Spleen (tissue), 13 donors: ENCODE measurements at regions of chr13 and their contacts with region 1.

Region 1: DNA sequence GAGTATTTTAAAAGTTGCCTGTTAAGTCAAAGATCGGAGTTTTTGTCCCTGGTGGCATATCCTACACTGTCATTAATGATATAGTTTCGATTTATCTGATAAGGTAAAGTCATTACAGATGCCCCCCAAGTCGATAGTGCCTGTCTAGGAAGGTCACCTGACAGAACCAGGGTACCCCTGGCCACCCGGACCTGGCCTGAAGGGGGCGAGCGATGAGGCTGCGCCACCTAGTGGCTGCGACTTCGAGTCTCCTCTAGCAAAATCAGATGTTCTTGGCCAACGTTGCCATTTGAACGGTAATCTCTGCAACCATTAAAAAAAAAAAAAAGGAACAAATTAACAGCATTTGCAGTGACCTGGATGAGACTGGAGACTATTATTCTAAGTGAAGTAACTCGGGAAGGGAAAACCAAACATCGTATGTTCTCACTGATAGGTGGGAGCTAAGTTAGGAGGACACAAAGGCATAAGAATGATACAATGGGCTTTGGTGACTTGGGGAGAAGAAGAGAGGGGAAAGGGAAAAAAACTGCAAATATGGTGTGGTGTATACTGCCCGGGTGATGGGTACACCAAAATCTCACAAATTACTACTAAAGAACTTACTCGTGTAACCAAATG is 565.1 kb downstream of the LIG4 start:
- DNase-seq: peak; percentile 68
- H3K4me3 ChIP-seq: no peak overlapping the region
- H3K27ac ChIP-seq: no peak overlapping the region
- H3K4me1 ChIP-seq: no peaks in the 10 kb centered on the region
- H3K27me3 ChIP-seq: no peaks in the 10 kb centered on the region
- CTCF ChIP-seq: peak in 10 of 11 experiments; percentile 12 to 65 (median 44)
- POLR2A ChIP-seq: no peak

Region 2: GRCh38 chr13:107211073-107211472 is 439.1 kb before region 1 on chr13:
- intact Hi-C with region 1: loop called (anchors 5 kb)
- DNase-seq: no peak
- H3K4me3 ChIP-seq: no peak overlapping the region
- H3K27ac ChIP-seq: no peak overlapping the region
- H3K4me1 ChIP-seq: peaks cover 0 to 5% (median 0%) of the 10 kb centered on the region in 6 donors
- H3K27me3 ChIP-seq: no peaks in the 10 kb centered on the region
- CTCF ChIP-seq: peak in 10 of 11 experiments; percentile 29 to 87 (median 72)
- POLR2A ChIP-seq: no peak